GM12878 (cell line): ENCODE measurements at regions of chr3 and their contacts with region 1.

Region 1: GRCh38 chr3:156674046-156674910 is at the start of gene TIPARP:
- DNase-seq: peak; percentile 99
- ATAC-seq: peak; percentile 84
- H3K4me3 ChIP-seq: peak within 1 kb of the TSS; percentile 98
- H3K27ac ChIP-seq: peak within 1 kb of the TSS; percentile 73
- H3K4me1 ChIP-seq: no peaks in the 10 kb centered on the region
- H3K27me3 ChIP-seq: no peaks in the 10 kb centered on the region
- CTCF ChIP-seq: peak; percentile 63 to 90 (median 86)
- EP300 ChIP-seq: peak; percentile 65 to 71
- POLR2A ChIP-seq: peak; percentile 100
- RAD21 ChIP-seq: peak; percentile 81
- polyA plus RNA-seq, gene TIPARP: 3.2 to 3.3 TPM

Region 2: DNA sequence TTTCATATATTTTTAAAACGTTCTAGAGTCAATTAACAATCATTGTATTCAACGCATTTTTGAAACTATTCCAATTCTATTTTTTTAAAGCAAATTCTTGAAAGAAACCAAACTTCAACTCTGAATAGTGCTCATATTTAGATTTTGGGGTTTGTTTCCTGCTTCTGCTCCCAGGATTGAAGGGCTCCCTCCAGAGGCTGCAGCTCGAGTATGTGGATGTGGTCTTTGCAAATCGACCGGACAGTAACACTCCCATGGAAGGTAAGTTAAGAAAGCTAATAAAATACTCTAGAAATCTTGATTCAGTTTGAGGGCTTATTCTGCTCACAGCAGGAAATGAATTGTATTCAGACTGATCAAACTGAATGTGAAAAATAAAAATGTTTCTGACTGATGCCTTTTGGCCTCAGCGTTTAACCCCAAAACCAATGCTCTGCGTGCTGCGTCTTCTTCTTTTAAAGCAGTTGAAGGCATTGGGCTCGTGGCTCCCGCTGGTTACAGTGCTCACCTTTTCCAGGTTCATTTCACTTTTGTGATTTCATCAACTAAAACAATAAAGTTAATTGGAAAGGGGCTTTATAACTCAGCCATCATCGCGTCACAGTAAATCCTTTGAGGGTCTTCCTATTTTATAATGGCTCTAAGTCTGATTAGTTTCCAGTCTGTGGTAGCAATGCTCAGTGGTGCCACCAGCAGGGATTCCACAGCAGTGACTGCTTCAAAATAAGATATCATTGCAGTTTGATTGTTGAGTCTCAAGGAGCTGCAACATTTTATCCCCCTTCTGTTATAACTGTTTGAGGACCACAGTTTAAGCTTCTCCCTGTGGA is 199.5 kb before region 1 on chr3:
- CTCF ChIA-PET with region 1: interaction called, 5 read pairs
- POLR2A ChIA-PET with region 1: no interaction called
- RAD21 ChIA-PET with region 1: no interaction called
- SMC1A ChIA-PET with region 1: no interaction called
- in situ Hi-C with region 1: no loop called
- intact Hi-C with region 1: loop called (anchors 2 kb)
- DNase-seq: no peak
- ATAC-seq: peak; percentile 56
- H3K4me3 ChIP-seq: no peak overlapping the region
- H3K27ac ChIP-seq: no peak overlapping the region
- H3K4me1 ChIP-seq: no peaks in the 10 kb centered on the region
- H3K27me3 ChIP-seq: peaks cover 0 to 2% of the 10 kb centered on the region in 2 experiments; a peak in 3 of 4 replicates
- CTCF ChIP-seq: peak; percentile 30 to 40 (median 35); a peak in 5 of 6 replicates
- EP300 ChIP-seq: no peak
- POLR2A ChIP-seq: no peak
- RAD21 ChIP-seq: no peak

Region 3: GRCh38 chr3:156509189-156510174 is 164.8 kb before region 1 on chr3:
- CTCF ChIA-PET with region 1: interaction called, 11 read pairs
- POLR2A ChIA-PET with region 1: no interaction called
- RAD21 ChIA-PET with region 1: interaction called, 5 read pairs
- SMC1A ChIA-PET with region 1: interaction called, 14 read pairs
- in situ Hi-C with region 1: no loop called
- intact Hi-C with region 1: no loop called
- DNase-seq: no peak
- ATAC-seq: peak; percentile 96
- H3K4me3 ChIP-seq: no peak overlapping the region
- H3K27ac ChIP-seq: no peak overlapping the region
- H3K4me1 ChIP-seq: no peaks in the 10 kb centered on the region
- H3K27me3 ChIP-seq: no peaks in the 10 kb centered on the region
- CTCF ChIP-seq: peak; percentile 36 to 70 (median 45); a peak in 4 of 6 replicates
- EP300 ChIP-seq: no peak
- POLR2A ChIP-seq: no peak
- RAD21 ChIP-seq: peak; percentile 86

Region 4: DNA sequence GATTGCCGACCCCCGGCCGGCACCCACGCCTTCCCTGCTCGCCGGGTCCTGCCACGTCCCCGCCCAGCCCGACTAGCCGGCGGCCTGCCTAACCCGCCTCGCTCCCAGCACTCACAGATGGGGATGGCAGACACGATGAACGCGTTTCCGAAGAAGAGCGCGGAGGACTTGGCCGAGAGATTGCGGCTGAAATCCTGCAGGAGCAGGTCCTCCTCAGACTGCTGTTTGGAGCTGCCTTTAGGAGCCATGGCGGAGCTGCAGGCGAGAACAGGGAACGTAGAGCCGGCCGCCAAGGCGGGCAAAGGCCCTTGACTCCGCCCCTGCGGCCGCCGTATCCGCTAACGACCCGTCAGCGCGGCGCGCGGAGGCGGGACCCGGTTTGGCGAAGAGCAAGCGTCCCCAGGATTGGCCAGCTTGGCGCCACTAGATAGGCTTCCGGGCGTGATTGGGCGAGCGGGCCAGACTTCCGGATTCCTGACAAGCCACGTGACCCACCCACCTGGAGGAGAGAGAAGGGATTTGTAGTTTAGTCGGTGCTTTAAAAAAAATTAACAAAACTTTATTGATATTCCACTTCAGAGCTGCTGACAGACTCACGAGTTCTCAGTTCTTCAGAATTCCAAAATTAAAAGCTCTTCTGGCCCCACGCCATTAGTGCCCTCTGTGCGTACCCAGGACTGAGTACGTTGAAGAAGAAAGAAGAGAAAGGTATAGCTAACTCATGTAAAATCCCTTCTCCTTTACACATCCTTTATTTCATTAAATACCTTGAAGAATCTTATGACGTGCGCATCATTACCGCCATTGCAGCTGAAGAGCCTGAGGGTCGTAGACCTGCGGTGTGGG is 119.2 kb before region 1 on chr3 and contains the start of gene SSR3:
- CTCF ChIA-PET with region 1: interaction called, 43 read pairs
- POLR2A ChIA-PET with region 1: interaction called, 20 read pairs
- RAD21 ChIA-PET with region 1: interaction called, 64 read pairs
- SMC1A ChIA-PET with region 1: interaction called, 47 read pairs
- in situ Hi-C with region 1: no loop called
- intact Hi-C with region 1: loop called (anchors 1 kb)
- DNase-seq: peak; percentile 95
- ATAC-seq: peak; percentile 99
- H3K4me3 ChIP-seq: peak within 1 kb of the TSS; percentile 92
- H3K27ac ChIP-seq: peak within 1 kb of the TSS; percentile 83
- H3K4me1 ChIP-seq: peaks cover 2% of the 10 kb centered on the region; the same call in 1 of the 2 replicates
- H3K27me3 ChIP-seq: no peaks in the 10 kb centered on the region
- CTCF ChIP-seq: peak in 1 of 3 experiments; percentile 2; a peak in 1 of 6 replicates
- EP300 ChIP-seq: no peak; a peak in 1 of 4 replicates
- POLR2A ChIP-seq: peak; percentile 95
- RAD21 ChIP-seq: no peak
- polyA plus RNA-seq, gene SSR3: 278 to 345 TPM

Region 5: DNA sequence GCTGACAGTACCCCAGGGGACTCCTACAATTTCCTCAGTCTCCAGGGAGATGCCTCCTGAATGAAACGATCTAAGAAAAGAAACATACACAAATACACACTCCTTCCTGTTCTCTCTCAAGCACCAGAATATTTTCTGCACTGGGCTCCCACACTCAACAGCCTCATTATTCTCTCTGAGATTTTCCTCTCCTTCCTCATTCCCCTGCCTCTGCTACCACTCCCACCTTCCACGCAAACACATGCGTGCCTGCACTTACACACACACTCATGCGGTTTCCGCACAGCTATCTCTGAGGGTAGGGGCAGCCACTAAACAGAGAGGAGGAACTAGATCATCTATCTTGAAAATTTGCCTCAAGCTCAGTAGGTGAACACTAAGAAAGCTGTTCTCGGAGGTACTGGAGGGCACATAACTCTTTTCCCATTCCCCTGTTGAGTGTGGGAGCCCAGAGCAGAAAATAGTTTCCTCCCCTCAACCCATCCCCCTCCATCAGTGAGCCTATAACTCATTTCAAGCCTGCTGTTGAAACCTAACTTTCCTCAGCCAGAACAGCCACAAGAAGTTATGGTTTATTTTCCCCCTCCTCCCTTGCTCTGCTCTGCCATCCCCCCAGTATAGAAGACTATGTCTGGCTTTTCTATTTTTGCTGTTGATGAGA is 30.4 kb before region 1 on chr3:
- CTCF ChIA-PET with region 1: interaction called, 27 read pairs
- POLR2A ChIA-PET with region 1: interaction called, 5 read pairs
- RAD21 ChIA-PET with region 1: interaction called, 8 read pairs
- SMC1A ChIA-PET with region 1: interaction called, 26 read pairs
- in situ Hi-C with region 1: no loop called
- intact Hi-C with region 1: no loop called
- DNase-seq: peak; percentile 76
- ATAC-seq: peak; percentile 90
- H3K4me3 ChIP-seq: peak overlapping the region; percentile 8; the same call in 1 of the 2 replicates
- H3K27ac ChIP-seq: peak overlapping the region; percentile 67
- H3K4me1 ChIP-seq: peaks cover 26% of the 10 kb centered on the region
- H3K27me3 ChIP-seq: no peaks in the 10 kb centered on the region
- CTCF ChIP-seq: no peak
- EP300 ChIP-seq: peak; percentile 81 to 84
- POLR2A ChIP-seq: no peak
- RAD21 ChIP-seq: no peak

Region 6: GRCh38 chr3:156816800-156817645 is 142.7 kb after region 1 on chr3:
- CTCF ChIA-PET with region 1: no interaction called
- POLR2A ChIA-PET with region 1: interaction called, 4 read pairs
- RAD21 ChIA-PET with region 1: interaction called, 12 read pairs
- SMC1A ChIA-PET with region 1: interaction called, 9 read pairs
- in situ Hi-C with region 1: no loop called
- intact Hi-C with region 1: loop called (anchors 1 kb)
- DNase-seq: peak; percentile 55
- ATAC-seq: peak; percentile 78
- H3K4me3 ChIP-seq: peak overlapping the region; percentile 85
- H3K27ac ChIP-seq: peak overlapping the region; percentile 95
- H3K4me1 ChIP-seq: peaks cover 27% of the 10 kb centered on the region
- H3K27me3 ChIP-seq: no peaks in the 10 kb centered on the region
- CTCF ChIP-seq: peak; percentile 11 to 34 (median 21); a peak in 3 of 6 replicates
- EP300 ChIP-seq: peak; percentile 99 to 100
- POLR2A ChIP-seq: peak; percentile 94
- RAD21 ChIP-seq: peak; percentile 30

Region 7: GRCh38 chr3:157136647-157137387 is 462.5 kb after region 1 on chr3:
- CTCF ChIA-PET with region 1: interaction called, 40 read pairs
- POLR2A ChIA-PET with region 1: no interaction called
- RAD21 ChIA-PET with region 1: interaction called, 20 read pairs
- SMC1A ChIA-PET with region 1: interaction called, 13 read pairs
- in situ Hi-C with region 1: loop called (anchors 5 kb)
- intact Hi-C with region 1: loop called (anchors 1 kb)
- DNase-seq: no peak
- ATAC-seq: no peak; the same call in 1 of the 3 replicates
- H3K4me3 ChIP-seq: no peak overlapping the region
- H3K27ac ChIP-seq: no peak overlapping the region
- H3K4me1 ChIP-seq: peaks cover 10% of the 10 kb centered on the region
- H3K27me3 ChIP-seq: no peaks in the 10 kb centered on the region
- CTCF ChIP-seq: no peak
- EP300 ChIP-seq: no peak
- POLR2A ChIP-seq: no peak
- RAD21 ChIP-seq: no peak